Activated CD8-positive, alpha-beta T cell treated with anti-CD3 and anti-CD28 coated beads for 36 hours (primary cell): ENCODE measurements at regions of chr1 and their contacts with region 1.

Region 1: DNA sequence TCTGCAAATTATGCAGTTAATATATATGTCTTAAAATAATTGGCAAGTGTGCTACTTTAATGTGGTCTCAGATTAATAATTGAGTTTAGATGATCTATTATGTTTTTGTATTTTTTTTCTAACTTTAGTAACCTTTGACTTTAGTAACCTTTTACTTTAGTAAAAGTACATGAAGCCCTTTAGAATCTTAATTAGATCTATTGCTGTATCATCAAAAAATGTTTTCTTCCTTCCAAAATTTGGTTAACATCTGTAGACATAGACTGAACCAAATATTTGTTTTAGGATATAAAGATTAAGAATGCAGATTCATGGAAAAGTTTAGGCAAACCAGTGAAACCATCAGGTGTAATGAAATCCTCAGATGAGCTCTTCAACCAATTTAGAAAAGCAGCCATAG is 25.7 kb upstream of the EPHX4 start:
- DNase-seq: no peak
- ATAC-seq: no peak
- H3K4me3 Mint-ChIP-seq: no peak overlapping the region
- H3K27ac Mint-ChIP-seq: no peak overlapping the region
- H3K4me1 Mint-ChIP-seq: no peaks in the 10 kb centered on the region
- H3K27me3 Mint-ChIP-seq: no peaks in the 10 kb centered on the region
- CTCF ChIP-seq: no peak

Region 2: DNA sequence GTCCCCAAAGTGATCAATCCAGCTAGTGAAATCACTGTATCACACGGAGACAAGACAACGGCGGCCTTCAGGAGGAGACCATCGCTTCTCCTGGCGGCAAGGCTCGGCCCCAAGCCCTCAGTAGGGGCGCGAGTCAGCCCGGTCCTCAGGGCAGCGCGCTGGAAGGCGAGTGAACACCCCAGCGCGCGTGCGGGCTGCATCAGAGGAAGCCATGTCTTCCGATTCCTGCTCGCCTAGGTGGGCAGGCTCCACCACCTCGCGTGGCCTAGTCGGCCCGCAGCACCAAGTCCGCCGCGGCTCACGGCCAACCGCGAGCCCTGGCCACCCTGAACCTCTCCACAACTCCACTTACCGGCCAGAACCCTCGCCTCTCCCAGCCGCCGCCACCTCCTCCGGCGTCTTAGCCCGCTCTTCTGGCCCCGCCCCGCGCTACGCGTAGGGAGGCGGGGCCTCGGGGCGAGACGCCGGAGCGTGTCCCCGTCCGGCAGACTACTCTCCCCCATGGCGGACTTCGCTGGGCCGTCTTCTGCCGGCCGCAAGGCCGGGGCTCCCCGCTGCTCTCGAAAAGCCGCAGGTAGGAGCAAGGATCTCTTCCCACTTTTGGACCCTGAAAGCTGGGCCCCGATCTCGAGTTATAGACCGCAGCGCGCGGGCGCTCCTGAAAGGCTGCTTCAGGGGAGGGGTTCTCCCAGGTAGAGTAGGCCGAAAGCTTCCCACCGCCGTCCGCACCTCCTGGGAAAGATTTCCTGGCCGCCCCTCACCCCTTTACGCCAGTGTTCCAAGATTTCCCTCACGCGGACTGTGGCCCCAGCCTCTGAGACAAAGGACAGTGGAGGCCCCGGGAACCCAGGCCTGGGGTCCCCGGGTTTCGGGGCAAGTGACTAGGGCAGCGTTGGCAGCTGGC is 294.7 kb after region 1 on chr1 and contains the starts of genes GLMN and RPAP2:
- CTCF ChIA-PET with region 1: no interaction called
- POLR2A ChIA-PET with region 1: no interaction called
- intact Hi-C with region 1: loop called (anchors 10 kb)
- DNase-seq: peak; percentile 75
- ATAC-seq: peak; percentile 98
- H3K4me3 Mint-ChIP-seq: peak within 1 kb of the TSS; percentile 84
- H3K27ac Mint-ChIP-seq: peak within 1 kb of the TSS; percentile 98
- H3K4me1 Mint-ChIP-seq: peaks cover 30% of the 10 kb centered on the region
- H3K27me3 Mint-ChIP-seq: no peaks in the 10 kb centered on the region
- CTCF ChIP-seq: peak; percentile 31
- total RNA-seq, gene GLMN: 16.8 TPM
- total RNA-seq, gene RPAP2: 31.5 to 32.2 TPM